Aorta (tissue), 5 donors: ENCODE measurements at regions of chr13 and their contacts with region 1.

Region 1: DNA sequence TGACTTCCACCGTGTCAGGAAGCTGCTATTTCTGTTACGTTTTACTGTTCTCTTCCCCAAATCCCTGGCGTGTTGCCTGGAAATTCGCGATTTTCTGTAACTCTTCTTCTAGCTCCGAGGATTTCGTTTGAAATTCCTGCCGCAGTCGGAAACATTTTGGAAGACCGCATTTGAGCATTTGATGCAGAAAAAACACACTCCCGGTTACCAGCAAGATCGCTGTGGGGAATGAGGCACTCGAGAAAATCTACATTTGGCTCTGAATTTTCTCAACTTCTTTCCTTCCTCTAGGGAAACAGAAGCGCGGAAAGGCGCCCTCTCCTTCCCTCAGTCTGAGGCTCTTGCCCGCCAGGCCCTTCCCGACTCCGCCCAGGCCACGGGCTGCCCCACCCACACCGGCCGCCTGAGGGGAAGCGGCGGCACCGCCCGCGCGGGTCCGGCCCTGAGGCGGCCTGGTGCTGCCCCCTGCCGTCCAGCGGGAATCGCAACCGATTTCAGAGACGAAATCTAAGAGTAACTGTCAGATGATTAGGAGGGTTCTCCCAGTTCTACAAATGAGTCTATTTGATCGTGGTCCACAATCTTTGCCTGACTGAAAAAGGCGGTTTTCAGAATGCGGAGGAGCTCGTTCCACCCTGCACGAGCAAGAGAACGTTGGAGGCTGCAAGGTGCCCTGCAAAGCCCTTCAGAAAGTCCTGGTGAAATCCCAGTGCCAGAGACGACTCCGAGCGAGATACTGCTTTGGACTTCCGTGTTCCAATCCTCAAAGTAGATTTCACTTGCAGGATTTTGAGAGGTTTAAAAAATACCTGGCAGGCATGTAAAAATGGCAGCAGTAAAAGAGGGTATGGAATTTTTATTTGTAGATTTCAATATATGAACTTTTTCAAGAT is 18.4 kb upstream of the TUBGCP3 start:
- DNase-seq: peak; percentile 96 to 98
- ATAC-seq: peak; percentile 100
- H3K4me3 ChIP-seq: peak overlapping the region; percentile 22 to 44
- H3K27ac ChIP-seq: peak overlapping the region in 1 of 2 donors; percentile 4
- H3K4me1 ChIP-seq: no peaks in the 10 kb centered on the region
- H3K27me3 ChIP-seq: no peaks in the 10 kb centered on the region

Region 2: GRCh38 chr13:111474136-111475002 is 1132.0 kb before region 1 on chr13:
- intact Hi-C with region 1: loop called (anchors 2 to 10 kb)
- DNase-seq: no peak
- ATAC-seq: no peak
- H3K4me3 ChIP-seq: no peak overlapping the region
- H3K27ac ChIP-seq: no peak overlapping the region
- H3K4me1 ChIP-seq: no peaks in the 10 kb centered on the region
- H3K27me3 ChIP-seq: no peaks in the 10 kb centered on the region

Region 3: DNA sequence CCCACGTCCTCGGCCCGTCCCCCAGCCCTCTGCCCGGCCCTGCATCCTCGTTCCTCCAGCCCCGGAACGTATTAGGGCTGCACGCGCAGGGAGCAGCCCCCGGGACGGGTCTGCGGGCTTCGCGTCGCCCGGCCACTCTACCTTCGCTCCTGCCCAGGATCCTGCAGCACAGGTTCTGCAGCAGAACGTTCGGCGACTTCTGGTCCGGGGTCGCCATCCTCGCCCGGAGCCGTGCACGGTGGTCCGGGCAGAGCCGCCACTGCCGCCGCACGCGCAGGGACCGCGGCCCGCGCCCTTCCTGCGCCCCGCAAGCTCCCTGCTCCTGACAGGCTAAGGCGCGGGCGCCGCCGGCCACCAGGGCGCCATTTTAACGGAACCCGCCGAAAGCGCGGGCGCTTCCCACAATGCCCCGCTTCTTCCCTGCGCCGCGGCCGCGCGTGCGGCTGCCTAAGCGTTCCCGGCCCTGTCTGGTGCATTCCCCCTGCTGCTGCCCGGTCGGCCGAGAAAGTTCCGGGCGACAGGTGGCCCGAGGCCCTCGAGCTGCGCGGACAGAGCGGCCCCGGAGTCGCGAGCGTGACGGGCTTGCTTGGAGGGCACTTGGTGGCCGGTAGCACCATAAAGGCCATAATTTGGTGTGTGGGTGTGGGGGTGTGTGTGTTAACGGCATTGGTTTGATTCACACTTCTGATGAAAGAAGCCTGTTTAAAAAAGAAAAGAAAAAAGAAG is 18.4 kb before region 1 on chr13 and contains the start of gene TUBGCP3:
- intact Hi-C with region 1: loop called in 1 of 2 experiments (anchors 2 kb)
- DNase-seq: peak; percentile 90 to 95
- ATAC-seq: peak; percentile 96
- H3K4me3 ChIP-seq: peak within 1 kb of the TSS; percentile 66 to 99
- H3K27ac ChIP-seq: peak within 1 kb of the TSS; percentile 83 to 89
- H3K4me1 ChIP-seq: no peaks in the 10 kb centered on the region
- H3K27me3 ChIP-seq: no peaks in the 10 kb centered on the region
- total RNA-seq, gene TUBGCP3: 34.7 to 45.9 TPM

Region 4: GRCh38 chr13:113098162-113098732 is 491.9 kb after region 1 on chr13:
- intact Hi-C with region 1: no loop called
- DNase-seq: no peak
- ATAC-seq: no peak
- H3K4me3 ChIP-seq: no peak overlapping the region
- H3K27ac ChIP-seq: no peak overlapping the region
- H3K4me1 ChIP-seq: no peaks in the 10 kb centered on the region
- H3K27me3 ChIP-seq: no peaks in the 10 kb centered on the region